Cardiac septum (tissue), 1 donor: ENCODE measurements at regions of chr17 and their contacts with region 1.

Region 1: GRCh38 chr17:69525920-69526841 is 111.7 kb downstream of the MAP2K6 start:
- DNase-seq: no peak

Region 2: GRCh38 chr17:69567130-69567529 is 40.9 kb after region 1 on chr17:
- intact Hi-C with region 1: no loop called
- DNase-seq: no peak

Region 3: GRCh38 chr17:70558821-70559220 is 1032.6 kb after region 1 on chr17:
- intact Hi-C with region 1: loop called (anchors 5 kb)
- DNase-seq: no peak